ENCODE measurements at regions of chr7 and their contacts with region 1.

Region 1: DNA sequence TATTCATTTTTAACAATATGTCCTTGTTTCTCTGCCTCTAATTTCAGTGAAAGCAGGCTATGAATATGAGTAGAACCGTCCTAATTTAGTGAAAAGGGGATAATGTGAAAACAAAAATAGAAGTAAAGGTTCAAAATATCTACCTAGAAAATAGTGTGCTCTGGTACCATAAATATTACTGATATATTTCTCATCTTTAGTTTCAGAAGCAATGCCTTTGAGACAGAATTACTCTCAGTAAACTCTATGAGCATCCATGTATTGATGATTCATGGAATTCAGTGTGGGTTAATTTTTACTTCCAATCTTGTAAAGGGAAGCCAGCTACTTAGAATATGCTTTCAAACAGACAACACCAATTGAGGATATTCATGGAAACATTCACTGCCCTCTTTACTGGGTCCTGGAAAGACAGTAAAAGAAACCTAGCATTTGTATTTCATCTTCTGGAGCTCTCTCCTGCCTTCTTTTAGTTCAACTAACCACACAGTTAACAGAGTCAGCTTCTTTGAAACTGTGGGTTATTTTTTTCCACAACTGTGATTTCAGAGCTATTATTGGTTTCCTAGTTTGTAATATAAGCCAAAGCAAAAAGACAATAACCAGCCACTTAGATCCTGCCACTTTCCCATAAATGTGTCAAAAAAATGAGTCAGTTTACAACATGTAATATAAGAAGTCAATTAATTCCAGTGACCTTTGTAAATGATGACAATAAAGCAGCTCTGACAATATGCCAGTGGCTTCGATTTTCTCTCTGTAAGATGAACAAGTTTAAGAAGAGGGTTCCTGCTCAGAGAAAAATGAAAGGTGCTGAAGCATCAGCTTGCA is 1.7 kb downstream of the LRRN3 start:
- DNase-seq: no peak
- H3K4me3 ChIP-seq: no peak overlapping the region
- H3K27ac ChIP-seq: no peak overlapping the region
- H3K4me1 ChIP-seq: no peaks in the 10 kb centered on the region
- H3K27me3 ChIP-seq: no peaks in the 10 kb centered on the region
- CTCF ChIP-seq: no peak
- POLR2A ChIP-seq: no peak

Region 2: GRCh38 chr7:111223802-111224253 is 131.2 kb after region 1 on chr7:
- intact Hi-C with region 1: no loop called
- DNase-seq: no peak
- H3K4me3 ChIP-seq: no peak overlapping the region
- H3K27ac ChIP-seq: no peak overlapping the region
- H3K4me1 ChIP-seq: no peaks in the 10 kb centered on the region
- H3K27me3 ChIP-seq: no peaks in the 10 kb centered on the region
- CTCF ChIP-seq: no peak
- POLR2A ChIP-seq: no peak

Region 3: GRCh38 chr7:111486472-111487142 is 394.0 kb after region 1 on chr7:
- intact Hi-C with region 1: loop called (anchors 1 kb)
- DNase-seq: no peak
- H3K4me3 ChIP-seq: no peak overlapping the region
- H3K27ac ChIP-seq: no peak overlapping the region
- H3K4me1 ChIP-seq: peaks cover 5% of the 10 kb centered on the region
- H3K27me3 ChIP-seq: no peaks in the 10 kb centered on the region
- CTCF ChIP-seq: peak in 3 of 4 experiments; percentile 54 to 75 (median 73)
- POLR2A ChIP-seq: no peak

Measured in prostate gland (tissue), 2 donors.